Sigmoid colon (tissue), 7 donors: ENCODE measurements at regions of chr21 and their contacts with region 1.

Region 1: GRCh38 chr21:24895885-24896734 is 711.2 kb downstream of the MRPL39 start:
- DNase-seq: no peak
- H3K4me3 ChIP-seq: no peak overlapping the region
- H3K27ac ChIP-seq: no peak overlapping the region
- H3K4me1 ChIP-seq: no peaks in the 10 kb centered on the region
- H3K27me3 ChIP-seq: no peaks in the 10 kb centered on the region
- CTCF ChIP-seq: peak in 3 of 4 experiments; percentile 27 to 46 (median 29)
- EP300 ChIP-seq: no peak
- POLR2A ChIP-seq: no peak

Region 2: DNA sequence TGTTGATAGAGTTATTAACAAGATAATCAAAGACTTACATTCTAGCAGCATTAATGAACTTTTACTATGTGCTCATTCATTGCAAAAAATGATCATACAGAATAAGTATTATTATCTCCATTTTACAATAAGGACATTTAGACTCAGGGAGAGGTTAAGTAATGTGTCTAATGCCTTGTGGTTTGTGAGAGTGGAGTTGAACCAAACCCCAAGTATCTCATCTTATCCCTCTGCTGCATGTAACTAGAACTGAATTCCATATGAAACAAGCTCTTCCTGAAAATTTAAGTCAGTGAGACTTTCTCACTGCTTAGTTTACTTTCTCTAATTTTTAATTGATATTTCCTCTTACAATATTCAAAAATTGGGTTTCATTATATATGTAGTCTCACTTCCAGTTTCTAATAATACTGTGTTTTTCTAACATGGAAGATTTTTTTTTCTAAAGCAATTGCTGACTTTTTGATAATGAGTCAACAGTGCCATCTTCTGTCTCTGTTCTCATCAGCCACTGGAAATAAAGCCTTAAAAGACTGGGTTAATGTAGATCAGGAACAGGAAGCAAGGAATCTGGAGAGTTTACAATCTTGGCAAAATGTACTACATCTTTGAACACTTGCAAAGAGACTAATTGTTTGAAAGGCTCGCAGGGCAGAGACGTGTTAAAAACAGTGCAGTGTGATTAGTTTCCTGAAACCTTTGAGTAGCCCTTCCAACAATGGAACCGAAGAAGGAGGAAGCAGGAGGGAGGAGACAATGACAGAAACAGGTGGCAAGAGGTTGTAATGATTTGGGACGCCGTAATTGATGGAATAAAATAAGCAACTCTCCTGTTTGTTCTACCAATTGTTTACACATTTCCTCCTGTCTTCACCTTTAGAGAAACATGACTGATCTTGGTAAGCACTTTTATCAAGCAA is 143.6 kb after region 1 on chr21:
- intact Hi-C with region 1: loop called (anchors 5 kb)
- DNase-seq: no peak
- H3K4me3 ChIP-seq: no peak overlapping the region
- H3K27ac ChIP-seq: no peak overlapping the region
- H3K4me1 ChIP-seq: no peaks in the 10 kb centered on the region
- H3K27me3 ChIP-seq: no peaks in the 10 kb centered on the region
- CTCF ChIP-seq: peak in 2 of 4 experiments; percentile 20 to 37
- EP300 ChIP-seq: no peak
- POLR2A ChIP-seq: no peak